A673 (cell line): ENCODE measurements at regions of chr4 and their contacts with region 1.

Region 1: GRCh38 chr4:127604949-127605709 is 27.6 kb upstream of the INTU start:
- DNase-seq: peak; percentile 64
- H3K4me3 ChIP-seq: no peak overlapping the region
- H3K27ac ChIP-seq: no peak overlapping the region
- H3K4me1 ChIP-seq: peaks cover 6% of the 10 kb centered on the region
- H3K27me3 ChIP-seq: no peaks in the 10 kb centered on the region
- CTCF ChIP-seq: peak; percentile 61

Region 2: DNA sequence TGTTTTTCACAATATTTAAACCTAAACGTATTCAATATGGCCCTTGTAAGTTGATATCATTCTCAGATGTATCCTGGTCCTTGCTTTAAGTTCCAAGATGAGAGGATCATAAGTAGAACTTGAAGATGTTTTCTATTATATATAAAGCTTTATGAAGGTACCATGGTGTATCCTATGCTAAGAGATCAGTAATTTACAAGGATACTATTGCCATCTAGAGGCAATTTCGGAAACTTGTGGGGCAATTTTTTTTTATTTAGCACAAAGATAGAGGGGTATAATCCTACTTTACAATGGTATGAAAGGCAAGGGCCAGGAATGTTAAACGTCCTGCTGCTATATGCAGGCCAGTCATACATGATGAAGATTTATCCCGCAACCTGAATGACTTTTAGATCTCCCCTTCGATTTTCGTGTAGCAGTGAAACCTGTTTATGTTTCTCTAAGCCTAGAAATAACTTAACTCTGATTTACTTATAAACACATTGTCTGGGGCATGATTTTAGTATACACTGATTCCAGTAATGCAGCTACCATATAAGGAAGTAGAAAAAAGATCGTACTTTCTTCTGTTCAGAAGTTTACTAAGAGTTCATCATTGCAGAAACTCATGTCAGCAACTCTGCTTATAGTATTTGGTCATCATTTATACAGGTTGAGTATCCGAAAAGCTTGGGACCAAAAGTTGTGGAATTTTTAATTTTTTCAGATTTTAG is 127.6 kb after region 1 on chr4:
- CTCF ChIA-PET with region 1: interaction called, 9 read pairs
- POLR2A ChIA-PET with region 1: no interaction called
- intact Hi-C with region 1: loop called (anchors 1 kb)
- DNase-seq: peak; percentile 65
- H3K4me3 ChIP-seq: no peak overlapping the region
- H3K27ac ChIP-seq: no peak overlapping the region
- H3K4me1 ChIP-seq: no peaks in the 10 kb centered on the region
- H3K27me3 ChIP-seq: no peaks in the 10 kb centered on the region
- CTCF ChIP-seq: peak; percentile 64

Region 3: DNA sequence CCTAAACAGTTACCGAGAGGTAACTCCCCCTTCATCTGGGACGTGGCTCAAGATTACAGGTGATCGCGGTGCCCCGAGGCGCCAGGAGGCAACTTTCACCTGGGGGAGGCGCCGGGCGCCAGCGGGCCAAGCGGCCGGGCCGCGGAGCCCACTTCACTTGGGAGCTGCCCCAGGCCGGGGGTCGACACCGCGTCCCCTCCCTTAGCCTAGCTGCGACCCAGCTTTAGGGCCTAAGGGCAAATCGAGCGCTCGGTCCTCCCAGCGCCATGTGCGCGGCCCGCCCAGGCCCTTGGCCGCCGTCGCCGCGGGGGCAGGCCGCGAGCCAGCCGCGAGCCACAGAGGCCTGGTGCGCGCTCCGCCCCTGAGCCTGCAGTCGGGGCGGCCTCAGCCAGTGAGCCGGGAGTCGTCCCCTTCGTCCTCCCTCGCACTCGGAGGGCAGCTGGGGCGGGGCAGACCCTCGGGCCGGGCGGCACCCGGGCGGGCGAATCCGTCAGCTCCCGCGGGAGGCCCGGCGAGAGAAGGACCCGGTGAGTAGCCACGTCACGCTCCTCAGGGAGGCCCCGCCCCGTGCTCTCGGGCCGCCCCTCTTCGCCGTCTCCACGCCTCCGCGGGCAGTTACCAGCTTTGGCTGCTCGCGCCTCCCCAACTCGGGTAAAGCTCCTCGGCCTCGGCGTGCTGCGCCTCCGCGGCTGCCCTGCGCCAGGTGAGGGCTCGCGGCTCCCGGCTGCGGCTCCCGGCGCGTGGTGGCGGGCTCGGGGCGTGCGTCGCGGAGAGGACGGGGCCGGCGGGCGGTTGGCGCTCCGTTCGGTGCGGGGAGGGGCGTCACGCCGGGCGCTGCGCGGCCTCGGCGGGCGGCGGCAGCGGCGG is 455.8 kb after region 1 on chr4 and contains the start of gene LARP1B:
- CTCF ChIA-PET with region 1: no interaction called
- POLR2A ChIA-PET with region 1: no interaction called
- intact Hi-C with region 1: loop called (anchors 10 kb)
- DNase-seq: peak; percentile 97
- H3K4me3 ChIP-seq: peak within 1 kb of the TSS; percentile 93
- H3K27ac ChIP-seq: peak within 1 kb of the TSS; percentile 96
- H3K4me1 ChIP-seq: peaks cover 13% of the 10 kb centered on the region
- H3K27me3 ChIP-seq: no peaks in the 10 kb centered on the region
- CTCF ChIP-seq: no peak
- total RNA-seq, gene LARP1B: 20.3 and 21.5 TPM in 2 replicates

Region 4: DNA sequence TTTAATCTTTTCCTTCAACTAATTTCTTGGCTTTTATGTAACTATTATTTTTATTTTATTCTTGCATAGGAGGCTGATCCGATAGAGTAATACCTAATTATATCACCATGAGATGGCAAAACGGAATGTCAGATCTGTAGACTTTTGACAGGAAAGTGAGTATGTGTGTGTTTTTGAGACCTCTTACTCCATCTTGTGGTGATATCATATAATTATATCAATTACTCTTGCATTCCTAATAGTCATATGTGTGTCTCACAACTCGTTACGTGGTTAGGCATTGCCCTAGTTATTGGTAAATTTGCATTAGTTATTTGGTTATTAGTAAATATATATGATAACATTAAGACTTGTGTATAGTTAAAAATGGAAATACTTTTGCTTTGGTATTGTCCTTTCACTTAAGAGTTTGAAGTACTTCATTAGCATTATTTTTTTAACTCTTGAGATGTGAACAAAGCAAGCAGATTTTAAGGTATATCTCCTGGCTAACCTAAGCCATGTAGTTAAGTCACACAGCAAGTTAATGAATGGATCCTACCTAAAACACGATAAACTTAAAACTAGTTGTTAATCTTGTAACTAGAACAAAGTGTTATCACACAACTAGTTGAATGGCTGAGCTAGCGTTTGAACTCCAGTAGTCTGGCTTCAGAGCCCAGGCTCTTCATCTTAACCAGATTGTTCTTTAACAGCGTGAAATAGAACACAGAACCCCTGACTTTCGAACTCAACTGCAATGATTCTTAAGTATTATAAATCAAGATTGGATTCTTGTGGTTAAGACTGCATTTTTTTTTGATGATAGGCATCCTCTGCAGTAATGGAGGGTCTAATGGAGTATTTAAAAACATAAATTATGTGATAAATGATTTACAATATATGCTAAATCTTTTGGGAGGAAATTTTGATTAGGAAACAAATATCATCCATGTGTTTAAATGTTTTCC is 615.4 kb after region 1 on chr4:
- CTCF ChIA-PET with region 1: no interaction called
- POLR2A ChIA-PET with region 1: no interaction called
- intact Hi-C with region 1: loop called (anchors 10 kb)
- DNase-seq: peak; percentile 67
- H3K4me3 ChIP-seq: no peak overlapping the region
- H3K27ac ChIP-seq: no peak overlapping the region
- H3K4me1 ChIP-seq: no peaks in the 10 kb centered on the region
- H3K27me3 ChIP-seq: no peaks in the 10 kb centered on the region
- CTCF ChIP-seq: peak; percentile 50; the same call in 1 of the 2 replicates